ENCODE measurements at regions of chr21 and their contacts with region 1.

Region 1: GRCh38 chr21:41068967-41069642 is 98.9 kb upstream of the BACE2 start:
- DNase-seq: peak; percentile 23
- ATAC-seq: peak; percentile 98
- H3K4me3 ChIP-seq: no peak overlapping the region
- H3K27ac ChIP-seq: no peak overlapping the region
- H3K4me1 ChIP-seq: no peaks in the 10 kb centered on the region
- H3K27me3 ChIP-seq: 0 out of 2 replicates have a peak, but pooled peaks cover 3% of the 10 kb centered on the region
- CTCF ChIP-seq: peak; percentile 15 to 88 (median 80); a peak in 4 of 6 replicates
- POLR2A ChIP-seq: no peak
- RAD21 ChIP-seq: peak; percentile 64

Region 2: DNA sequence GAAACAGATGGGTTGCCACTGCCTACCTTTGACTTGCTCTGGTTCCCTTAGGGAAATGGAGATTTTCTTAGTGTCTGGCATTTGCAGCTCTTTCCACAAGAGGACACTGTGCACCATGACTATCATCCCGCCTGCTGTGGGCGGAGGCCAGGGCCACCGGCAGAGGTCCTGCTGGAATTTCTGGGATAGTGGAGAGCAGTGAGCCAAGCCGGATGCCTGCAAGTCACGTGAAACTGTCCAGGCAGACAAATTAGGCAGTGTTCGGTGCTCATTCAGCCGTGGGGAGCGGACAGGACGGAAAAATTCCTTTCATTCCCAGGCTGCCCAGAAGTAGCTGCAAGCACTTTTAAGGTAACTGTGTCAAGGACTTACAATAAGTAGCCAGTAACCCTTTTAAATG is 1280.7 kb before region 1 on chr21:
- CTCF ChIA-PET with region 1: no interaction called
- POLR2A ChIA-PET with region 1: no interaction called
- RAD21 ChIA-PET with region 1: no interaction called
- intact Hi-C with region 1: loop called (anchors 1 kb)
- DNase-seq: peak; percentile 66
- ATAC-seq: peak; percentile 100
- H3K4me3 ChIP-seq: no peak overlapping the region; a peak in 1 of 4 replicates
- H3K27ac ChIP-seq: no peak overlapping the region
- H3K4me1 ChIP-seq: peaks cover 5 to 9% of the 10 kb centered on the region in 2 experiments; a peak in 2 of 4 replicates
- H3K27me3 ChIP-seq: no peaks in the 10 kb centered on the region
- CTCF ChIP-seq: peak; percentile 86 to 95 (median 93)
- POLR2A ChIP-seq: no peak
- RAD21 ChIP-seq: peak; percentile 76

Region 3: GRCh38 chr21:39867198-39867650 is 1201.9 kb before region 1 on chr21 and contains the start of gene PCP4:
- CTCF ChIA-PET with region 1: no interaction called
- POLR2A ChIA-PET with region 1: no interaction called
- RAD21 ChIA-PET with region 1: no interaction called
- intact Hi-C with region 1: loop called (anchors 1 kb)
- DNase-seq: peak; percentile 27
- ATAC-seq: peak; percentile 81
- H3K4me3 ChIP-seq: no peak within 1 kb of the TSS
- H3K27ac ChIP-seq: no peak within 1 kb of the TSS
- H3K4me1 ChIP-seq: no peaks in the 10 kb centered on the region
- H3K27me3 ChIP-seq: 0 out of 2 replicates have a peak, but pooled peaks cover 4% of the 10 kb centered on the region
- CTCF ChIP-seq: peak; percentile 22 to 86 (median 85); a peak in 5 of 6 replicates
- POLR2A ChIP-seq: no peak
- RAD21 ChIP-seq: peak; percentile 53
- total RNA-seq, gene PCP4: not detected

Region 4: DNA sequence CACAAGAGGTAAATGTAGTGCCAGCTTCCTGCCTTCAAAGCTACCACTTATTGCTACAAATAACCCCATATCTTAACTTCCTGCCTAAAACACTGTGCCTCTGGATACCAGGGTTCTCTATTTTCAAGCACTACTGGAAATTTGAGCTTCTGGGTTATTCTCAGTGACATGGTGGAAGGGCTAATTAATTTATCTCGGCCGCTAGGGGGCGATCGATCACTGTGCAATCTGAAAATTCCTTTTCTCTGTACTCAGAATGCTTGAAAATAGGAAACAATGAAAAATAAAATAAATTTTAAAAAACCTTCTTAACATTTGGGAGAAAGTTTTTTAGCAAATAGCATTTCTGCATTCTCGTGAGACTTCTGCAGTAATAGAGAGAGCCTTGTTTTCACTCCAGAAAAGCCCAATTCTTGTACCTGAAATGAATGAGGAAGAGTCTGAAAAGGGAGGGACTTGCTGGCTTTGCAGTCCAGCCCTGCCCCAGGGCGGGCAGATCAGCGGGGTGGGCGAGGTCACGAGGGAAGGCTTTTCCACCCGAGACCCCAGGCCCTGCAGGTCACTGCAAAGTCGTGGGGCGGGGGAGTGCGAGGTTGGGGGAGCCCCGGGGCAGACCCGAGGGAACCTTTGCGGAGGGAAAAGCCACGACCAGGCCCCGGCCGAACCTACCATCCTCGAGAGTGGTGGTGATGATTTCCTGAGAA is 925.1 kb before region 1 on chr21:
- CTCF ChIA-PET with region 1: interaction called, 4 read pairs
- POLR2A ChIA-PET with region 1: no interaction called
- RAD21 ChIA-PET with region 1: no interaction called
- intact Hi-C with region 1: loop called (anchors 2 kb)
- DNase-seq: peak; percentile 6
- ATAC-seq: peak; percentile 46; the same call in 1 of the 2 replicates
- H3K4me3 ChIP-seq: no peak overlapping the region
- H3K27ac ChIP-seq: no peak overlapping the region
- H3K4me1 ChIP-seq: no peaks in the 10 kb centered on the region
- H3K27me3 ChIP-seq: no peaks in the 10 kb centered on the region
- CTCF ChIP-seq: peak; percentile 24 to 71 (median 49); a peak in 4 of 6 replicates
- POLR2A ChIP-seq: no peak
- RAD21 ChIP-seq: peak; percentile 39

Region 5: DNA sequence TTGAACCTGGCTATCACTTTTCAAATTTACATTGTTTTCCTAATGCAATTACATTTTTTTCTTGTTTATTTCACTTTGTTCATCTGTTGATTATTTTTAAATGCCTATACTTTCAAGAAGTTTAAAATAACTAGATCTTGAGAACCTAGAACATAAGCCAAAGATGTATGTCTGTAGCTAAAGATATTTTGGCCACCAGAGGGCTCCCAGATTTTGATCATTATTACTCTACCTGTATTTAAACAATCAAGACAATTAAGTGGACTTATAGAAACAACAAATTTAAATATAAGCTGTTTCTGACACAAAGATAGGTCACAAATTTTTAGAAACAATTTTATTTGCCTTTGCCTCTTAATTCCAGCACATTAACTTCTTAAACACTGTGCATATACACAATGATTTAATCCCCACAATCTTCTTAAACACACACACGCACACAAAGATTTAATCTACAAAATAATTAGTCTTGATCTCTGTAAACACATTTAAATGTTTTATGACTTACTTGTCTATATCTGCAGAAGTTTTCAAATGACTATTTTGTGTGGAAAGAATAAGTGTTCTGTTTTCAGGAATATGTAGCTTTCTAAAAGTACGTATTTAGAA is 602.1 kb before region 1 on chr21:
- CTCF ChIA-PET with region 1: no interaction called
- POLR2A ChIA-PET with region 1: no interaction called
- RAD21 ChIA-PET with region 1: no interaction called
- intact Hi-C with region 1: loop called (anchors 5 kb)
- DNase-seq: no peak
- ATAC-seq: no peak
- H3K4me3 ChIP-seq: no peak overlapping the region
- H3K27ac ChIP-seq: no peak overlapping the region
- H3K4me1 ChIP-seq: no peaks in the 10 kb centered on the region
- H3K27me3 ChIP-seq: no peaks in the 10 kb centered on the region
- CTCF ChIP-seq: peak in 2 of 3 experiments; percentile 16 to 28; a peak in 3 of 6 replicates
- POLR2A ChIP-seq: no peak
- RAD21 ChIP-seq: no peak

Region 6: GRCh38 chr21:40947713-40948112 is 121.4 kb before region 1 on chr21:
- CTCF ChIA-PET with region 1: no interaction called
- POLR2A ChIA-PET with region 1: no interaction called
- RAD21 ChIA-PET with region 1: no interaction called
- intact Hi-C with region 1: no loop called
- DNase-seq: no peak
- ATAC-seq: no peak
- H3K4me3 ChIP-seq: no peak overlapping the region
- H3K27ac ChIP-seq: no peak overlapping the region
- H3K4me1 ChIP-seq: no peaks in the 10 kb centered on the region
- H3K27me3 ChIP-seq: no peaks in the 10 kb centered on the region
- CTCF ChIP-seq: no peak
- POLR2A ChIP-seq: no peak
- RAD21 ChIP-seq: no peak